ENCODE measurements at regions of chr17 and their contacts with region 1.

Region 1: GRCh38 chr17:2303204-2304188 is at the starts of genes SMG6 and SRR:
- DNase-seq: peak; percentile 96
- H3K4me3 Mint-ChIP-seq: peak within 1 kb of the TSS; percentile 92
- H3K27ac Mint-ChIP-seq: peak within 1 kb of the TSS; percentile 73
- H3K4me1 Mint-ChIP-seq: peaks cover 49% of the 10 kb centered on the region
- H3K27me3 Mint-ChIP-seq: no peaks in the 10 kb centered on the region
- total RNA-seq, gene SMG6: 37.8 to 38.7 TPM
- total RNA-seq, gene SRR: 19.3 to 19.5 TPM

Region 2: DNA sequence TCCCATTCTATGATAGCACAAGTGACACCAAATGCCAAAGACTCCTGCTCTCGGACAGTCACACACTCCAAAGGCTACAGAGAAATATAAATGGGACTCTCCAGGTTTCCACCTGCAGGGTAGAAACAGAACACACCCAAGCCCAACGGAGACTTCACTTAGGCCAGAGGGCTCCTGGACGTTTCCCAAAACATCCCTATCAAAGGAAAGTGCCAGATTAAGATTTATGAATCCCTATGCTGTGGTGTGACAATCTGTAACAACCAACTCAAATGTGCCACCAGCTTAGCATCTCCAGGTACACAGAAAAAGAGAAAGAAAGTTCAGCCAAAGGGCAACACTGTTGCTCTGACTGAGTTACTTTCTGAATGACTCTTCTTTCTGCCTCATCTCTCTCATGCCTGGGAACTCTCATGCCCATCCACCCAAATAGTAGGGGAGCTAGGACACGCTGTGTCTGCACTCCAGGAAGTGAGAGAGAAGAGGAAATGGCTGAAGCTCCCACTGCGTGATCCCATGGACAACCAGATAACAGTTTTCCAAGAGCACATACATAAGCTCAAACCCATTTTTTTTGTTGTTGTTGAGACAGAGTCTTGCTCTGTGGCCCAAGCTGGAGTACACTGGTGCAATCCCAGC is 49.6 kb before region 1 on chr17:
- CTCF ChIA-PET with region 1: no interaction called
- POLR2A ChIA-PET with region 1: interaction called, 10 read pairs
- DNase-seq: peak; percentile 54
- H3K4me3 Mint-ChIP-seq: peak overlapping the region; percentile 14
- H3K27ac Mint-ChIP-seq: peak overlapping the region; percentile 89
- H3K4me1 Mint-ChIP-seq: peaks cover 74% of the 10 kb centered on the region
- H3K27me3 Mint-ChIP-seq: no peaks in the 10 kb centered on the region

Region 3: DNA sequence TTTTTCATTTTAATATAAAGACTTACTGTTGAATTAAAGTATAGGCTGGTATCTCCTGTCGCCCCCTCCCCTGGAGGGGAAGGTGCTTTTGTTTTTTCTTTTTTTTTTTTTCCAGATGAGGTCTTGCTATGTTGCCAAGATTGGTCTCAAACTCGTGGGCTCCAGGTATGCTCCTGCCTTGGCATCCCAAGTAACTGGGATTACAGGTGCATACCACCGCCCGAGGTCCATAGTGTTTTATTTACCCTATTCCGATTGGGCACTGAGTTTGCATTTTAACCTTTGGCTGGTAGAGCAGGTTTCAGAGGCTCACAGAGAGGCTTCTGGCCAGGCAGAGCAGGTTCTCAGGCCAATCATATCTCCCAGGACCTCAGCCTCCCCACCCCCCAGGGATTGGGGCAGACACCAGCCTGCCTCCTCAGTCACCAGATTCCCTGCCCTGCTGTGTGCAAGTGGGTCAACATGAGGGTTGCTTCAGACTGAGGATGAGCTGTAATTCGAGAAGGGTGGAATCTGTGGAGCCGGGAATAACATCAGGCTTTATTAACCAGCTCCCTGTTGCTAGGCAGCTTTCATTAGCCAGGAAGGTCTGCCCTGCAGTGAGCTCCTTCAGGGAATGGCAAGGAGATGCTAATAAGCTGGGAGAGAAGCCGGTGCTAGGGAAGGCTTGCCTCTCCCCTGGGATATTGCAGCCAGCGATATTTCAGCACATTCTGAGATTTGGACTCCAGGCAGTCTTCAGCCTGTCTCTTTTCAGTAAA is 44.2 kb after region 1 on chr17:
- CTCF ChIA-PET with region 1: interaction called, 10 read pairs
- POLR2A ChIA-PET with region 1: interaction called, 9 read pairs
- DNase-seq: no peak
- H3K4me3 Mint-ChIP-seq: no peak overlapping the region
- H3K27ac Mint-ChIP-seq: no peak overlapping the region
- H3K4me1 Mint-ChIP-seq: peaks cover 5% of the 10 kb centered on the region
- H3K27me3 Mint-ChIP-seq: no peaks in the 10 kb centered on the region